ENCODE measurements at regions of chr15 and their contacts with region 1.

Region 1: GRCh38 chr15:28125673-28126651 is 26.8 kb upstream of the OCA2 start:
- DNase-seq: no peak
- ATAC-seq: peak; percentile 39
- H3K4me3 Mint-ChIP-seq: no peak overlapping the region
- H3K27ac Mint-ChIP-seq: no peak overlapping the region
- H3K4me1 Mint-ChIP-seq: peaks cover 2% of the 10 kb centered on the region
- H3K27me3 Mint-ChIP-seq: no peaks in the 10 kb centered on the region

Region 2: GRCh38 chr15:28014623-28015200 is 111.2 kb before region 1 on chr15:
- CTCF ChIA-PET with region 1: no interaction called
- DNase-seq: no peak
- ATAC-seq: no peak
- H3K4me3 Mint-ChIP-seq: no peak overlapping the region
- H3K27ac Mint-ChIP-seq: no peak overlapping the region
- H3K4me1 Mint-ChIP-seq: no peaks in the 10 kb centered on the region
- H3K27me3 Mint-ChIP-seq: no peaks in the 10 kb centered on the region

Region 3: GRCh38 chr15:28114721-28115622 is 11.0 kb before region 1 on chr15:
- CTCF ChIA-PET with region 1: interaction called, 15 read pairs
- DNase-seq: no peak
- ATAC-seq: no peak
- H3K4me3 Mint-ChIP-seq: no peak overlapping the region
- H3K27ac Mint-ChIP-seq: no peak overlapping the region
- H3K4me1 Mint-ChIP-seq: no peaks in the 10 kb centered on the region
- H3K27me3 Mint-ChIP-seq: no peaks in the 10 kb centered on the region

Region 4: DNA sequence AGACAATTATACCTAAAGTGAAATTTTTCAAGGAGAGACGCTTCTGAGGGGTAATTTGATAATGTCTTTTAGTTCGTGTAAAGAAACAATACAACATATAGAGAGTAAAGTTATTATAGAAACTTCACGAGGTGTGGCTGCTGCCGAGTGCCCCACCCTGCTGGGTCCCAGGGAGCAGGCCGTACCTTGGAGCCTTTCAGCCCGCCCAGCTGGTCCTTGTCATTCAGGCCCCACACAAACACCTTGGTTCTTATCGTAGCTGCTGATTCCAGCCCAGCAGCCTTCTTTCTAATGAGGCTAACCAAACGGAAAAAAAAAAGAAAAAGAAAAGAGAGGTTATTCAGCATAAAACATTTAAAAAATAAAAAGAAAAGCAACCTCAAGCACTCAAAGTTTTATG is 56.3 kb after region 1 on chr15:
- CTCF ChIA-PET with region 1: no interaction called
- DNase-seq: no peak
- ATAC-seq: no peak
- H3K4me3 Mint-ChIP-seq: no peak overlapping the region
- H3K27ac Mint-ChIP-seq: no peak overlapping the region
- H3K4me1 Mint-ChIP-seq: no peaks in the 10 kb centered on the region
- H3K27me3 Mint-ChIP-seq: no peaks in the 10 kb centered on the region

Measured in activated CD8-positive, alpha-beta memory T cell treated with anti-CD3 and anti-CD28 coated beads, Interleukin-2, amount 10 ng/mL, durations not matched to agents 7 days and 5 days (primary cell).